Activated naive CD4-positive, alpha-beta T cell treated with anti-CD3 and anti-CD28 coated beads for 36 hours (primary cell): ENCODE measurements at regions of chr1 and their contacts with region 1.

Region 1: DNA sequence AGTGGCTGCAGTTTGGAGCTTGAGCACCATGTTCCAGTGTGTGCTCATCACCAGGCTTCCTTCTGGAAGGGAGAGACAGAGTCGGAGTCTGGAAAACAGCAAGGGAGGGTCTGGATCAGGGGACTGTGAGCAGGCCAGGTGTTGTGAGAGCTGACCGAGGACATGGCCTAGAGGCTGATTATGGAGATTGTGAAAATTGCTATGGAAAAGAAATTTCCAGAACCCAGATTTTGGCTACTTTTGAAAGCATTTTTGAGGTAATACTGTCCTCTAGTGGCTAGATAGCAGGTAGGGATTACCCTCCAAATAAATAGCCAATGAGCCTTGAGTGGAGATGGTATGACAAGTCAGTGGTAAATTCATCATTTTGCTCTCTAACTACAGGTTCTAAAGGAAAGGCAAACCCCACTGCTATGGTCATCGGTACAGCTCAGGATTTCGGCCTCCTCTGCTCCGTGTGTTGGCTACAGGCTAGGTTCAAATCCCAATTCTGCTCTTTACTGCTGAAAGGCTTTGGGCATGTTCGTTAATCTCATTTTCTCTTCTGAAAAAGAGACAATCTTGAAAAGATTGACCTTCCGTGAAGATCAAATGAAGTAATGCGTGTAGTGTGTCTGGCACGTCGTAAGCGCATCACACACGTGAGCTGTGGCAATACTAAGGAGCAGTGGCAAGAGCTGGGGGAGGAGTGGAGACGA is 1.0 kb upstream of the HAO2 start:
- DNase-seq: no peak
- H3K4me3 Mint-ChIP-seq: no peak overlapping the region
- H3K27ac Mint-ChIP-seq: no peak overlapping the region
- H3K4me1 Mint-ChIP-seq: no peaks in the 10 kb centered on the region
- H3K27me3 Mint-ChIP-seq: peaks cover 25% of the 10 kb centered on the region

Region 2: DNA sequence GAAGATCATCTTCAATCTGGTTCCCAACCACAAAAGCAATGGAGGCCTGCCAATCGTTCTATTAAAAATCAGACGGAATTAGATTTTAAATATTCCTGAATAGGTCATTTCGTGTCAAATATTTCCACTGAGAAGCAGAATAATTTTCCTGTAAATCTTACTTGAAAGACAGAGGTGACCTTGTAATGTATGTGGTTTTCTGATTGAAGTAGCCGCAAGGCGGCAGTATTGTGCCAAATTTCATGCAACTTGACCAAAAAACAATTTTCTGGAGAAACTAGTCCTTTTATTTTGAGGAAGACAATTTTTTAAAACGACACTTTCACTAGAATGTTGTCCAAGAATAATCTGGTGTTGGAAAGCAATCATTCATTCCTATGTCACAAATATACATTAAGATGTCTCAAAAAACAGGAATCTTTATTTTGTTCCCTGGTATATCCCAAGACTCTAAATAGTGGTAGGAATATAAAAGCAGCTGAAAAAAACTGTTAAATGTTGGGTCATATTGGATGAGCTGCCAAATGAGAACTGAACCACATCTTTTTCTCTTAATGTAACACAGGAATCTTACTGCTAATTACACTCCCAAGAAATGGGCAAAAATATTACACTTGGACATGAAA is 1216.2 kb before region 1 on chr1:
- CTCF ChIA-PET with region 1: no interaction called
- intact Hi-C with region 1: loop called (anchors 1 kb)
- DNase-seq: peak; percentile 60
- H3K4me3 Mint-ChIP-seq: no peak overlapping the region
- H3K27ac Mint-ChIP-seq: no peak overlapping the region
- H3K4me1 Mint-ChIP-seq: no peaks in the 10 kb centered on the region
- H3K27me3 Mint-ChIP-seq: peaks cover 6% of the 10 kb centered on the region

Region 3: GRCh38 chr1:119291611-119292206 is 75.9 kb before region 1 on chr1:
- CTCF ChIA-PET with region 1: interaction called, 10 read pairs
- intact Hi-C with region 1: loop called (anchors 1 kb)
- DNase-seq: no peak
- H3K4me3 Mint-ChIP-seq: no peak overlapping the region
- H3K27ac Mint-ChIP-seq: no peak overlapping the region
- H3K4me1 Mint-ChIP-seq: peaks cover 17% of the 10 kb centered on the region
- H3K27me3 Mint-ChIP-seq: peaks cover 17% of the 10 kb centered on the region

Region 4: DNA sequence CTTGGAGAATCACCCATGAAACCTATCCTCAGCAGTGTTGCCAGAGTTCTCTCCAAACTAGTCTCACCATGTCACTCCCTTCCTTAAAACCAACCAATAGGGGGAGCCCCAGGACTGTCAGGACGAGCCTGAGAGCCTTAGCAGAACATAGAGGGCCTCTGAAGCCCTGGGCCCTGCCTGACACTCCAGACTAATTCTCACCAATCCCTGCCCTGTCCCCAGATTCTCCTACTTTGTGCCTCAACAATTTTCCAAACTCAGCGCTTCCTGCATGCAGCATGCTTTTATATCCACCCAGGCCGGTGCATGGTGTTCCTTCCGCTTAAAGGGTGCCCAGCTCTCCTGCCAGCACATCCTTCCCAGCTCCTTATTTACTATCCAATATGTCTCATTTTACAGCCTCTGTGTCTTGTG is 182.2 kb after region 1 on chr1:
- CTCF ChIA-PET with region 1: no interaction called
- intact Hi-C with region 1: no loop called
- DNase-seq: peak; percentile 52
- H3K4me3 Mint-ChIP-seq: no peak overlapping the region
- H3K27ac Mint-ChIP-seq: no peak overlapping the region
- H3K4me1 Mint-ChIP-seq: no peaks in the 10 kb centered on the region
- H3K27me3 Mint-ChIP-seq: peaks cover 2% of the 10 kb centered on the region